ENCODE measurements at regions of chr11 and their contacts with region 1.

Region 1: GRCh38 chr11:12963792-12964536 is 45.2 kb upstream of the RASSF10 start:
- H3K4me3 ChIP-seq: no peak overlapping the region
- H3K27ac ChIP-seq: no peak overlapping the region
- H3K4me1 ChIP-seq: no peaks in the 10 kb centered on the region
- CTCF ChIP-seq: 0 out of 2 replicates have a peak, but pooled peaks have one; percentile 35

Region 2: GRCh38 chr11:11010624-11011127 is 1953.3 kb before region 1 on chr11:
- CTCF ChIA-PET with region 1: no interaction called
- POLR2A ChIA-PET with region 1: no interaction called
- H3K4me3 ChIP-seq: no peak overlapping the region
- H3K27ac ChIP-seq: no peak overlapping the region
- H3K4me1 ChIP-seq: no peaks in the 10 kb centered on the region
- CTCF ChIP-seq: no peak

Region 3: DNA sequence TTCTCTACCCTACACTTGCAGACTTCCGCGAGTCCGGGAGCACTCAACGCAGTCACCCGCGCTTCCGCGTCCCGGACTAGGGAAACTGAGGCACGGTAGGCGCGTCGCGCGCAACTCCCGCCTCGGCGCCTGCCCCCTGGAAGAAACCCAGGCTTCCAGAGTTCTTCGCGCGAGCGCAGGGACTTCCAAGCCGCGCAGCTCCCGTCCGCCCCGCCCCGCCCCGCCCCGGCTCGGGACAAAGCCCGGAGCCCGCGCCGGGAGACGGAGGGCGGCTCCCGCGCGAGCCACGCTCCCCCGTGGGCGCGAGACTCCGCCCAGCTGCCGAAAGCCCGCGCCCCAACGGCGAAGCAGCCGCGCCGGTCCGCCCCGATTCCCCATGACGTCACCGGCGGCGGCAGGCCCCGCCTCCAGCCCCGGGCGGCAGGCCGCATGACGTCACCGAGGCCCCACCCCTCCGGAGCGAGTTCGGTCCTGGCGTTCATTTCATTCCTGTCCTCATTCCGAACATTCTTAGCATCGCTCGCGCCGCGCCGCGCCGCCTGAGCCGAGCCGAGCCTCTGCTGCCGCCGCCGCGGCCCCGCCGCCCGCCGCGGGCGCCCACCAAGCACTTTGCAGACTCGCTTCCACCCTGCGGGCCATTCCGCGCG is 289.9 kb before region 1 on chr11 and contains the start of gene TEAD1:
- CTCF ChIA-PET with region 1: no interaction called
- POLR2A ChIA-PET with region 1: no interaction called
- H3K4me3 ChIP-seq: peak within 1 kb of the TSS; percentile 78
- H3K27ac ChIP-seq: peak within 1 kb of the TSS; percentile 69; the same call in 1 of the 2 replicates
- H3K4me1 ChIP-seq: 0 out of 2 replicates have a peak, but pooled peaks cover 4% of the 10 kb centered on the region
- CTCF ChIP-seq: no peak

Region 4: DNA sequence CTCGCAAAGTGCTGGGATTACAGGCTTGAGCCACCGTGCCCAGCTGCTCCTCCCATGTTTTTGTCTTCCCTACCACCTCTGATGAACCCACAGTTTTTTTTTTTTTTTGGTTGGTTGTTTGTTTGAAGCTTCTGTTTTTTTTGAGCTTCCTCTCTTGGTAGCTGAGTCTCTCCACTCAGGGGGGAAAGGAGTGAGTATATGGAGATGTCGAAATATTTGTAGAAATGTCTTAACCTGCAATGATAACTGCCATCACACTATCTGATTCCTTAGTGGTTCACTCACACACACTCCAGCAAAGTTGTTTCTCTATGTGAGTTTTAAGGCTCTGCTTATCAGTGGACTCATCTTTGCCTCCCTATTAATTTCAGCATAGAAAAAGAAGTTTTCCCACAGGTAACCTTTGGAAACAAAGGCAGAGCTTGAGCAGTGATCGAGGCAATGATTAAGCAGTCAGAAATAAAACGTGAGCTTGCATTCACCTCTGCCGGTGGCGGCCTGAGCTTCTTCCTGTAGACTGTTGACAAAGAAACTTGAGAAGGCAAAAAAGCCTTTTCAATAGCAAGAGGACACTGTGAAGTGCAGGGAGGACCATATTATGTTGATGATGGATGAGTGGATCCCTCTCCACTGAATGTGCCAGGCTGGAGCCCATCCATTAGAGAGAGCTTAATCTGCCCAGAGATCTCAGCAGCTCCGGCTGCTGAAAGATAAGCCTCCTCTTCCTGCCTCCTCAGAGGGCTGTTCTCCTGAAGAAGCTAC is 16.1 kb after region 1 on chr11:
- CTCF ChIA-PET with region 1: interaction called, 20 read pairs
- POLR2A ChIA-PET with region 1: interaction called, 5 read pairs
- H3K4me3 ChIP-seq: no peak overlapping the region
- H3K27ac ChIP-seq: no peak overlapping the region
- H3K4me1 ChIP-seq: no peaks in the 10 kb centered on the region
- CTCF ChIP-seq: no peak

Region 5: DNA sequence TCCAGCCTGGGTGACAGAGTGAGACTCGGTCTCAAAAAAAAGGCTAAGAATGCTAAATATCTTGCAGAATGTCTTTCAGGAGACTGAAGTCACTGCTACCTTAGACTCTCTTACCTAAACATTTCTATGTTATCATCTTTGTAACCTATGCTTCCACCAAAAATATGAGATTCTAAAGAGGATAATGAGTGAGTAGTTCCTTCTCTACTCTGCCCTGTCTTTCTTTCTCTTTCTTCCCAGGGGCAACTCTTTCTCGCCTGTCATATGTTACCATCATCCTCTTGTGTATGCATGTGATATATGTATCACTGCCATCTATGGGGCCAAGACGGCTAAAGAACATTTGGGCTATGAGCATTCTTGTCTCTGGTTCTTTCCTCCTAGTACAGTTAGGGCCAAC is 36.2 kb after region 1 on chr11:
- CTCF ChIA-PET with region 1: no interaction called
- POLR2A ChIA-PET with region 1: no interaction called
- H3K4me3 ChIP-seq: no peak overlapping the region
- H3K27ac ChIP-seq: no peak overlapping the region
- H3K4me1 ChIP-seq: no peaks in the 10 kb centered on the region
- CTCF ChIP-seq: no peak

Region 6: GRCh38 chr11:13152736-13153533 is 189.0 kb after region 1 on chr11:
- CTCF ChIA-PET with region 1: interaction called, 24 read pairs
- POLR2A ChIA-PET with region 1: no interaction called
- H3K4me3 ChIP-seq: no peak overlapping the region
- H3K27ac ChIP-seq: no peak overlapping the region
- H3K4me1 ChIP-seq: no peaks in the 10 kb centered on the region
- CTCF ChIP-seq: no peak

Region 7: GRCh38 chr11:13183094-13183825 is 219.3 kb after region 1 on chr11:
- CTCF ChIA-PET with region 1: interaction called, 24 read pairs
- POLR2A ChIA-PET with region 1: no interaction called
- H3K4me3 ChIP-seq: no peak overlapping the region
- H3K27ac ChIP-seq: no peak overlapping the region
- H3K4me1 ChIP-seq: no peaks in the 10 kb centered on the region
- CTCF ChIP-seq: no peak